ENCODE measurements at regions of chr3 and their contacts with region 1.

Region 1: DNA sequence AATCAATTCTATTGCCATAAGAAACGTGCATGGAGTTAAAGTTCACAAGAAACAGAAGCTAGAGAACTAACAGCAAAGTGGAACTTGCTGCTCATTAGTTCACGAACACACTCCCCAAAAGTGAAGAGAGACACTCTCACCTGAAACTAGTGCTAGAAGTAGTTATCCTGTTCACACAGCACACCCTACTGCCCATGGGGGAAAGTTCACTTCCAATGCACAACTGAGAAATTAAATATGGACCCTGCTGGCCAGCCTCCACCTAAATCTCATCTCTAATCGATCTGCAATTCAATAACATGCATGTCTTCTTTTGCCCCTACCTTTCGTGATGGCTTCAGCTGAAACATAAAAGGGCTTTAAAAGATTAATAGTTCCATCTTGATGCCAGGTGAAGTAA is 39.4 kb upstream of the FRMD4B start:
- DNase-seq: peak in 1 of 2 experiments; percentile 58
- H3K4me3 ChIP-seq: no peak overlapping the region
- H3K4me3 Mint-ChIP-seq: no peak overlapping the region
- H3K27ac Mint-ChIP-seq: no peak overlapping the region
- H3K4me1 ChIP-seq: peaks cover 15% of the 10 kb centered on the region
- H3K4me1 Mint-ChIP-seq: peaks cover 18% of the 10 kb centered on the region
- H3K27me3 ChIP-seq: no peaks in the 10 kb centered on the region
- H3K27me3 Mint-ChIP-seq: no peaks in the 10 kb centered on the region
- CTCF ChIP-seq: peak; percentile 53 to 57

Region 2: DNA sequence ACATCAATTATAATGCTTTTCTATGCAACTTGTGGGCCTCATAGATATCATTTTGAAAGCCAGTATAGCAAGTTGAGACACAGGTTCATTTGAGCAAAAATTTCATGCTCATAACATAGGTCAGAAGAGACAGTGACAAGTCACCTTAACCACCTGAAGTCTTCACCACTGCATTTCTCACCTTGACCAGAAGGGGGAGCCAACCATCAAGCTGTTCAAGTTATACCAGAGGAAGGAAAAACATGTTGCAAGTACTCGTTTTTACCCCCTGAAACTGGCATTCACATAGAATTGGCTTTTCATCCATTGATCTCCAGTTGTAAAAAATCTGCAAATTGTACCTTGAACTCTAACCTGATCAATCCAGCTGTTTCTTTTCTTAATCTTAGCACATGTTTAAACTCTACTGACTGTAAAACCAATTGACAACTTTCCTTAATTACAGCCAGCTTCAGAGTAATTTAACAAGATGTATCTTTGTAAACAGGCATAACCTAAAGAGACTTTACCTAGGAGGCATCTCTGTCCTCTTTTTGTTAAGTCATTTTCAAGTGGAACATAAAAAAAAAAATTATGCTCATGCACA is 304.3 kb before region 1 on chr3:
- CTCF ChIA-PET with region 1: no interaction called
- POLR2A ChIA-PET with region 1: no interaction called
- intact Hi-C with region 1: loop called (anchors 1 kb)
- DNase-seq: peak; percentile 81 to 84
- H3K4me3 ChIP-seq: no peak overlapping the region
- H3K4me3 Mint-ChIP-seq: no peak overlapping the region
- H3K27ac Mint-ChIP-seq: no peak overlapping the region
- H3K4me1 ChIP-seq: peaks cover 8% of the 10 kb centered on the region; the same call in 1 of the 2 replicates
- H3K4me1 Mint-ChIP-seq: no peaks in the 10 kb centered on the region
- H3K27me3 ChIP-seq: no peaks in the 10 kb centered on the region
- H3K27me3 Mint-ChIP-seq: no peaks in the 10 kb centered on the region
- CTCF ChIP-seq: peak; percentile 86 to 92

Region 3: GRCh38 chr3:69306239-69307185 is 118.7 kb before region 1 on chr3:
- CTCF ChIA-PET with region 1: interaction called, 4 read pairs
- POLR2A ChIA-PET with region 1: no interaction called
- intact Hi-C with region 1: loop called (anchors 1 kb)
- DNase-seq: peak; percentile 66 to 77
- H3K4me3 ChIP-seq: no peak overlapping the region
- H3K4me3 Mint-ChIP-seq: no peak overlapping the region
- H3K27ac Mint-ChIP-seq: no peak overlapping the region
- H3K4me1 ChIP-seq: peaks cover 25% of the 10 kb centered on the region
- H3K4me1 Mint-ChIP-seq: peaks cover 11% of the 10 kb centered on the region
- H3K27me3 ChIP-seq: no peaks in the 10 kb centered on the region
- H3K27me3 Mint-ChIP-seq: no peaks in the 10 kb centered on the region
- CTCF ChIP-seq: peak; percentile 85 to 87

Region 4: GRCh38 chr3:69324362-69325025 is 100.8 kb before region 1 on chr3:
- CTCF ChIA-PET with region 1: interaction called, 4 read pairs
- POLR2A ChIA-PET with region 1: no interaction called
- intact Hi-C with region 1: loop called (anchors 1 kb)
- DNase-seq: peak in 1 of 2 experiments; percentile 27
- H3K4me3 ChIP-seq: no peak overlapping the region
- H3K4me3 Mint-ChIP-seq: no peak overlapping the region
- H3K27ac Mint-ChIP-seq: peak overlapping the region; percentile 81
- H3K4me1 ChIP-seq: peaks cover 49% of the 10 kb centered on the region
- H3K4me1 Mint-ChIP-seq: peaks cover 30% of the 10 kb centered on the region
- H3K27me3 ChIP-seq: no peaks in the 10 kb centered on the region
- H3K27me3 Mint-ChIP-seq: no peaks in the 10 kb centered on the region
- CTCF ChIP-seq: peak; percentile 50 to 52

Region 5: DNA sequence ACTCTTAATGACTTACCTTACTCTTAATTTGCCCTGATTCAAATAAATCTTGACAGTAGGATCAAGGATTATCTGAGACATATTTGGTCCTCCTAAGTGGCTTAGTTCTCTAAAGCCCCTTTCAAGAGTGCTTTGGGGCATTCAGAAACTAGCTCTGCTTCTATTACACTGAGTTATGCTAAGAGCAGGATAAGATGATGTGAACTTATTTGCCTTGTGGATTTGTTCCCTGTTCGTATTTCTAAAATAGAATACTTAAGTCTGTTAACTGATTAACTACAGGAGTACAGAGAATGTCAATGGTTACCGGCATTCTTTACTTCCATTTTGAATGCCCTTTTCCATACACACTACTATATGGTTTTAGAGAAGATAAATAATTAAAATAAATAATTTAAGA is 24.6 kb before region 1 on chr3:
- CTCF ChIA-PET with region 1: no interaction called
- POLR2A ChIA-PET with region 1: no interaction called
- intact Hi-C with region 1: no loop called
- DNase-seq: no peak
- H3K4me3 ChIP-seq: no peak overlapping the region
- H3K4me3 Mint-ChIP-seq: no peak overlapping the region
- H3K27ac Mint-ChIP-seq: no peak overlapping the region
- H3K4me1 ChIP-seq: peaks cover 14% of the 10 kb centered on the region
- H3K4me1 Mint-ChIP-seq: peaks cover 8% of the 10 kb centered on the region
- H3K27me3 ChIP-seq: no peaks in the 10 kb centered on the region
- H3K27me3 Mint-ChIP-seq: no peaks in the 10 kb centered on the region
- CTCF ChIP-seq: no peak

Region 6: GRCh38 chr3:69439643-69440270 is 14.5 kb after region 1 on chr3:
- CTCF ChIA-PET with region 1: no interaction called
- POLR2A ChIA-PET with region 1: no interaction called
- intact Hi-C with region 1: loop called (anchors 1 kb)
- DNase-seq: no peak
- H3K4me3 ChIP-seq: no peak overlapping the region
- H3K4me3 Mint-ChIP-seq: no peak overlapping the region
- H3K27ac Mint-ChIP-seq: no peak overlapping the region
- H3K4me1 ChIP-seq: peaks cover 17% of the 10 kb centered on the region
- H3K4me1 Mint-ChIP-seq: peaks cover 7% of the 10 kb centered on the region
- H3K27me3 ChIP-seq: no peaks in the 10 kb centered on the region
- H3K27me3 Mint-ChIP-seq: no peaks in the 10 kb centered on the region
- CTCF ChIP-seq: peak; percentile 67 to 73

Region 7: DNA sequence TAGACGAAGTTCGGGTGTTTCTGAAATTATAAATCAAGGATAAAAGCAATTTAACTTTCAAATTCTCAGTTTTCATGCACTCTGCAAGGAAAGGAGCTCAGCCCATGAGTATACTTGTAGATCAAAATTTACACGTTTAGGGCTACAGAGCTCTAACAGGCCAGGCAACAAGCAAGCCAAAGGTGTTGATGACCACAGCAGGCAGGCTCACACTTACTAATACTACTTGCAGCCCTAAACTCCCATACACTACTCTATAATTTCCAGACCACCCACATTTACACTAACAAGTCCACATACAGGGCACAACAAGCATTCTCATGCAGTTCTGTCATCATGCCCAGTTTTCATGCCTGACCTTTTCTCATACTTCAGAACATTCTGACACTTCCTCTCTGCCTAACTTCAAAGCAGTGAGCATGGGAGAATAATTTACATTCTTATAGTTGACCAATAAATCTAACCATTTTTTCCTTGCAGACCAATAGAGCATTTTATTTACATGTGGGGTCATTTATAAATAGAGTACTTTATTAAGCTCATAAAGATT is 85.3 kb after region 1 on chr3:
- CTCF ChIA-PET with region 1: no interaction called
- POLR2A ChIA-PET with region 1: no interaction called
- intact Hi-C with region 1: no loop called
- DNase-seq: no peak
- H3K4me3 ChIP-seq: no peak overlapping the region
- H3K4me3 Mint-ChIP-seq: no peak overlapping the region
- H3K27ac Mint-ChIP-seq: no peak overlapping the region
- H3K4me1 ChIP-seq: no peaks in the 10 kb centered on the region
- H3K4me1 Mint-ChIP-seq: no peaks in the 10 kb centered on the region
- H3K27me3 ChIP-seq: peaks cover 1% of the 10 kb centered on the region; the same call in 1 of the 2 replicates
- H3K27me3 Mint-ChIP-seq: peaks cover 18% of the 10 kb centered on the region
- CTCF ChIP-seq: no peak

Region 8: DNA sequence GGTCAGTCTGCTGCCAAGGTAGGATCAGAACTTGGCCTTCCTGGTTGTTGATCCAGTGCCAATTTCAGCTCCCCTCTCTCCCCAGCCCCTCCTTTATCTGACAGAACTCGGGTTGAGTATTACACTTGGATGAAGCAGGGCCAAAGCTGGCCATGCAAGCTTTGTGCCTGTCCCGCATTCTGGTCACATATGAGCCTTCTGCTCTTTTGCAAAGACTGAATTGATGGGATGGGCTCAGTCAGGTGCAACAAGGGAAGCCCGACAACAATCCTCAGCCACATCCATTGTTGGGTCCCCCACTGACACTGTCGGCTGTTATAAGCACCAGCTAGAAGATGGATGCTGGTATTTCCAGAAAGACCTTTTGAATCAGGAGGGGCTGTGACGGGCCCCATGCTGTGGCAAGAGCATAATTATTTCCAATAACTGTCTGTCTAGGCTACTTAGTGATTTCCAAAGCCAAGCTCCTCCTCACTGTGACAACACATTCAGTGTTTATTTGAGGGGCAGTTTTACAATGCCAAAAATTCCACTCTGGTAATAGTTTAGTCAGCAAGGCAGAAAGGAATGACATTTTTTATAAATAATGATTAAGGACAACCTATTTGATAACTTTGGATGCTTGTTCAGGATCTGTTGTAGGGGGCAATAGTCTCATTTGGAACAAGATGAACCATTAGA is 107.4 kb after region 1 on chr3:
- CTCF ChIA-PET with region 1: no interaction called
- POLR2A ChIA-PET with region 1: no interaction called
- intact Hi-C with region 1: no loop called
- DNase-seq: no peak
- H3K4me3 ChIP-seq: no peak overlapping the region
- H3K4me3 Mint-ChIP-seq: no peak overlapping the region
- H3K27ac Mint-ChIP-seq: no peak overlapping the region
- H3K4me1 ChIP-seq: no peaks in the 10 kb centered on the region
- H3K4me1 Mint-ChIP-seq: no peaks in the 10 kb centered on the region
- H3K27me3 ChIP-seq: no peaks in the 10 kb centered on the region; the same call in 1 of the 2 replicates
- H3K27me3 Mint-ChIP-seq: peaks cover 24% of the 10 kb centered on the region
- CTCF ChIP-seq: no peak

Region 9: GRCh38 chr3:69671082-69671952 is 246.1 kb after region 1 on chr3:
- CTCF ChIA-PET with region 1: no interaction called
- POLR2A ChIA-PET with region 1: no interaction called
- intact Hi-C with region 1: loop called (anchors 5 kb)
- DNase-seq: peak in 1 of 2 experiments; percentile 49
- H3K4me3 ChIP-seq: no peak overlapping the region
- H3K4me3 Mint-ChIP-seq: no peak overlapping the region
- H3K27ac Mint-ChIP-seq: no peak overlapping the region
- H3K4me1 ChIP-seq: no peaks in the 10 kb centered on the region
- H3K4me1 Mint-ChIP-seq: no peaks in the 10 kb centered on the region
- H3K27me3 ChIP-seq: no peaks in the 10 kb centered on the region; the same call in 1 of the 2 replicates
- H3K27me3 Mint-ChIP-seq: no peaks in the 10 kb centered on the region
- CTCF ChIP-seq: peak; percentile 58 to 67

Region 10: GRCh38 chr3:69784954-69785514 is 359.8 kb after region 1 on chr3:
- CTCF ChIA-PET with region 1: no interaction called
- POLR2A ChIA-PET with region 1: no interaction called
- intact Hi-C with region 1: no loop called
- DNase-seq: no peak
- H3K4me3 ChIP-seq: no peak overlapping the region
- H3K4me3 Mint-ChIP-seq: no peak overlapping the region
- H3K27ac Mint-ChIP-seq: no peak overlapping the region
- H3K4me1 ChIP-seq: peaks cover 24% of the 10 kb centered on the region
- H3K4me1 Mint-ChIP-seq: peaks cover 14% of the 10 kb centered on the region
- H3K27me3 ChIP-seq: no peaks in the 10 kb centered on the region
- H3K27me3 Mint-ChIP-seq: no peaks in the 10 kb centered on the region
- CTCF ChIP-seq: no peak